Natural killer cell (primary cell): ENCODE measurements at regions of chr15 and their contacts with region 1.

Region 1: DNA sequence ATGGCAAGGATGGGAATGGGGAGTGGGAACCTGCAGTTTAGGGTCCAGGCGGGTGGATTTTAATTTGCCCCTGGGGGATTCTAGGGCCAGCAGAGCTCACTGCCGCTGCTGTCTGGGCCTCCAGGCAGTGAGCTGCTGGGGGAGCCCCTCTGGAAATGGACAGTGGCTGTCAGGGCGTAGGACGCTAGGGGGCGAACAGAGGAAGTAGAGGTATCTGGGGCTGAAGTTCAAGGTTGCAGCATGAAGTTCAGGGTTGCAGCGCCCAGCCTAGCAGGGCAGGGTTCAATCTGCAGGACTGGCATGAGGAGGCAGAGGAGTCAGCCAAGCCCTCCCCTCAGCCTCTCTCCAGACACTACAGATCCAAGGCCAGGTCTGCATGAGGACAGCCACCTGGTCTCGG is 49.6 kb downstream of the APBA2 start:
- DNase-seq: peak; percentile 53 to 76
- ATAC-seq: peak; percentile 51 to 76 (median 69)
- H3K4me3 ChIP-seq: no peak overlapping the region
- H3K4me3 Mint-ChIP-seq: peak overlapping the region; percentile 78
- H3K27ac ChIP-seq: no peak overlapping the region
- H3K27ac Mint-ChIP-seq: peak overlapping the region; percentile 89 to 97
- H3K4me1 ChIP-seq: peaks cover 68% of the 10 kb centered on the region
- H3K4me1 Mint-ChIP-seq: peaks cover 59 to 76% of the 10 kb centered on the region in 2 donors
- H3K27me3 ChIP-seq: no peaks in the 10 kb centered on the region
- H3K27me3 Mint-ChIP-seq: no peaks in the 10 kb centered on the region
- CTCF ChIP-seq: peak; percentile 73

Region 2: DNA sequence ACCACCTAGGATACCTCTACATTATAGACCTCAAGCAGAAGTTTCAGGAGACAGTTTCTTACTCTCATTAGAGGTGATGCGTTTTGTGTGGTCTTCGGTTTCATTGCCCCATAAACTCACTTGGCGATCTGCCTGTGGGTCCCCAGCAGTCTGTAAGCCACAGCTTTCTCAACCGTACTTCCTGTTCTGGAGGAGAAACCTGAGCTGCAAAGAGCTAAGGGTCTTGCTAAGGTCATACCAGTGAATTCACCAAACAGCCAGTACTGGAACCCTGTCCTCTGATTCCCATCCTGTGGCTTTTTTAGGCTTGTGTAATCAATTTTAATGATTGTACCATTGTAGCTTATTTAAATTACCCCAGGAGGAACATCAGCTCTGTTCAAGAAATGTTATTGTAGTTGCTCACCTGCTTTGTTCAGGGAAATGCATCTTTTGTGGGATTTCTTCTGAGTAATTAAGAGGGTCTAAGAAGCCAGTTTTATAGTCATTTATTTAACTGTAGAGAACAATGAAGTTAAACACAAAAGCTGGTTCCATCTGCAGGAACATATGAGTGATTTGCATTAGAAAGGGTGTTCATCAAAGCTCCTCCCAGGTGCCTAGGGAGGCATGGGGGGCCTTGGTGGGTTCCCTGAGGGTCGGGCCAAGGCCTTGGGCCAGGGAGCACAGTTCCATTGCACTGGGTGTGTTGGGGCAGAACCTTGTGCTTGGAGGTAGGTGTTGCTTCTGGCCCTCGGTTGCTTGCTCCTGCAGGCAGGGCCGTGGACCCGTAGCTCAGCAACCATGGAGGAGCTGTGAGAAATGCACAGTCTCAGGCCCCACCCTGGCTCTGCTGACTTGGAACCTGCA is 20.1 kb after region 1 on chr15:
- intact Hi-C with region 1: loop called (anchors 2 kb)
- DNase-seq: peak in 1 of 2 donors; percentile 60
- ATAC-seq: peak; percentile 58 to 81 (median 62)
- H3K4me3 ChIP-seq: no peak overlapping the region
- H3K4me3 Mint-ChIP-seq: peak overlapping the region; percentile 87
- H3K27ac ChIP-seq: peak overlapping the region; percentile 71
- H3K27ac Mint-ChIP-seq: peak overlapping the region; percentile 94 to 95
- H3K4me1 ChIP-seq: peaks cover 58% of the 10 kb centered on the region
- H3K4me1 Mint-ChIP-seq: peaks cover 67 to 68% of the 10 kb centered on the region in 2 donors
- H3K27me3 ChIP-seq: no peaks in the 10 kb centered on the region
- H3K27me3 Mint-ChIP-seq: no peaks in the 10 kb centered on the region
- CTCF ChIP-seq: no peak

Region 3: DNA sequence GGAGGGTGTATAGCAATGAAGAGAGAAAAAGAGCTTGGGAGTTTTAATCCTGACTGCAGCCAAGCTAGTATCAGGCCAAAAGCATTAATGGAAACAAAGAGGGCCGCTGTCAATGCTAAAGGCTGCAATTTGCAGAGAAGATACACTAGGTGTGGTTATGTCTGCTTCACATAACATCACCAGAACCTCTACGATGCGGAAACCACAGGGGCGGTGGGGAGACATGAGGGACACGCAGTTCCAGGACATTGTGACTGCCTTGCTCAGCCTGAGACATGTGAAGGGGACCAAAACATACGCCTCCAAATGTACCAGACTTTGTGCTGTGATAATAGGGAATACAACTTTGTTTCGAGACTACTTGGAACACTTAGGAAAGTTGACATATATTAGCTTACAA is 38.8 kb after region 1 on chr15:
- intact Hi-C with region 1: loop called (anchors 1 kb)
- DNase-seq: peak; percentile 51 to 73
- ATAC-seq: peak; percentile 82 to 96 (median 90)
- H3K4me3 ChIP-seq: no peak overlapping the region
- H3K4me3 Mint-ChIP-seq: peak overlapping the region; percentile 61
- H3K27ac ChIP-seq: peak overlapping the region; percentile 77
- H3K27ac Mint-ChIP-seq: peak overlapping the region; percentile 93 to 95
- H3K4me1 ChIP-seq: peaks cover 8% of the 10 kb centered on the region
- H3K4me1 Mint-ChIP-seq: peaks cover 53 to 57% of the 10 kb centered on the region in 2 donors
- H3K27me3 ChIP-seq: no peaks in the 10 kb centered on the region
- H3K27me3 Mint-ChIP-seq: no peaks in the 10 kb centered on the region
- CTCF ChIP-seq: no peak

Region 4: GRCh38 chr15:28994831-28995596 is 59.7 kb after region 1 on chr15:
- intact Hi-C with region 1: loop called (anchors 2 kb)
- DNase-seq: no peak
- ATAC-seq: no peak
- H3K4me3 ChIP-seq: no peak overlapping the region
- H3K4me3 Mint-ChIP-seq: peak overlapping the region; percentile 73
- H3K27ac ChIP-seq: peak overlapping the region; percentile 85
- H3K27ac Mint-ChIP-seq: peak overlapping the region; percentile 90 to 93
- H3K4me1 ChIP-seq: peaks cover 53% of the 10 kb centered on the region
- H3K4me1 Mint-ChIP-seq: peaks cover 60 to 77% of the 10 kb centered on the region in 2 donors
- H3K27me3 ChIP-seq: no peaks in the 10 kb centered on the region
- H3K27me3 Mint-ChIP-seq: no peaks in the 10 kb centered on the region
- CTCF ChIP-seq: no peak

Region 5: DNA sequence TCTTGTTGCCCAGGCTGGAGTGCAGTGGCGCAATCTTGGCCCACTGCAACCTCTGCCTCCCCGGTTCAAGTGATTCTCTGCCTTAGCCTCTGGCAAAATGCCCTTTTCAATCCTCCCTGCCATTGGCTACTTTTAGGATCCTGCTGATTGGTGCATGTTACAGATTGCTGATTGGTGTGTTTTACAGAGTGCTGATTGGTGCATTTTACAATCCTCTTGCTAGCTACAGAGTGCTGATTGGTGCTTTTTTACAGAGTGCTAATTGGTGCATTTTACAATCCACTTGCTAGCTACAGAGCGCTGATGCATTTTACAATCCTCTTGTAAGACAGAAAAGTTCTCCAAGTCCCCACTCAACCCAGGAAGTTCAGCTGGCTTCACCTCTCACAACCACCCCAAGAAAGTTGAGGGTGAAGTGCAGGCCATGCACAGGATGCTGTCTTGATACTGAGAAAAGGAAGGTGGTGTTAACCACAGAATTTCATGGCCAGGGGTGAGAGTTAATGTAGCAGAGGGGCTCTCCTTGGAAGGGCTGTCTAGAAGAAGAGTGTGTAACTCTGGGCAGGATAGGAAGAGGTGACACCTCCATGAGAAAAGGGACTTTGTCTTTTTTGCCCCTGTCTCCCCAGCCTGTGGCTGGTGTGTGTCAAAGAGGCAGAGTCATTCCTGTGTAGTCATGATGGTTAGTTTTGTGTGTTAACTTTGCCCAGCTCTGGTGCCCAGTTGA is 96.3 kb after region 1 on chr15:
- intact Hi-C with region 1: loop called (anchors 5 kb)
- DNase-seq: peak; percentile 35 to 45
- ATAC-seq: peak; percentile 83 to 87 (median 83)
- H3K4me3 ChIP-seq: no peak overlapping the region
- H3K4me3 Mint-ChIP-seq: peak overlapping the region; percentile 60
- H3K27ac ChIP-seq: peak overlapping the region; percentile 75
- H3K27ac Mint-ChIP-seq: peak overlapping the region; percentile 87 to 90
- H3K4me1 ChIP-seq: peaks cover 64% of the 10 kb centered on the region
- H3K4me1 Mint-ChIP-seq: peaks cover 72 to 79% of the 10 kb centered on the region in 2 donors
- H3K27me3 ChIP-seq: no peaks in the 10 kb centered on the region
- H3K27me3 Mint-ChIP-seq: no peaks in the 10 kb centered on the region
- CTCF ChIP-seq: no peak

Region 6: DNA sequence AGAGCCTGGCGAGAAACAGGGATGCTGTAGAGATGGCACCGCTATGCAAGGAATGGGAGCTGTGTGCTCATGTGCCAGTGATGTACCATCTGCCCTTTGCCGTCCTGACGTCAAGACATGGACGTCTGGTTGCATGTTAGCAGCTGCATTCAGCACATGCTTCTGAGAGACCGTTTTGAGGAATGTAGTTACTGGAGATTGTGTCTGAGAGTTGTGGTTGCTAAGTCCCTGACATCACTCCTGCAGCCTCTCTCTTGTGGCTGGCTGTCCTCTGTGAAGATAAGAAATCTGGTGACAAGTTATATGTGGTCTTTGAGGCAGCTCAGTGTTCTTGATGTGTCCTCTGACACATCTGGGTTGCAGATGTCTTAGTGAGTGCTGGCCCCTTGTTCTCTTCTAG is 115.5 kb after region 1 on chr15:
- intact Hi-C with region 1: loop called (anchors 5 kb)
- DNase-seq: peak; percentile 28 to 57
- ATAC-seq: peak; percentile 88 to 96 (median 90)
- H3K4me3 ChIP-seq: no peak overlapping the region
- H3K4me3 Mint-ChIP-seq: peak overlapping the region; percentile 63
- H3K27ac ChIP-seq: peak overlapping the region; percentile 54
- H3K27ac Mint-ChIP-seq: peak overlapping the region; percentile 83 to 87
- H3K4me1 ChIP-seq: peaks cover 26% of the 10 kb centered on the region
- H3K4me1 Mint-ChIP-seq: peaks cover 56 to 60% of the 10 kb centered on the region in 2 donors
- H3K27me3 ChIP-seq: no peaks in the 10 kb centered on the region
- H3K27me3 Mint-ChIP-seq: no peaks in the 10 kb centered on the region
- CTCF ChIP-seq: no peak

Region 7: DNA sequence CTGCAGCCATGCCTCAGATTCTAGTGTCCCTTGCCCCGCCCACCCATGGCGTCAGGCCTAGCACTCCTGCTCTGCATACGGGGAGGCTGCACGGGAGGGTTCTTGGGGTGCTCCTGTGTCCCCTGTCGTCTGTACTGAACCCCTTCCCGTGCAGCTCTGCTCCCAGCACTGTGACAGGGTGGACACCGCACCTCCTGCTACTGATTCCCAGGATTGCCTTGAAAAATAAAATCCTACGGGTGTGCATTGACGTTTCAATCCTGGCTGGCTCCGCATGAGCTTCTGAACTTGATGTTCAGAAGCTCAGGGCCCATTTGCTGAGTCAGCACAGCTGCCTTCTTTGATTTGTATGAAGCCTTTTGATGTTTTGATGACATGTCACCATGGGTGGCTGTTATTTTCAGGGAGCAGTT is 126.9 kb after region 1 on chr15:
- intact Hi-C with region 1: no loop called
- DNase-seq: no peak
- ATAC-seq: no peak
- H3K4me3 ChIP-seq: no peak overlapping the region
- H3K4me3 Mint-ChIP-seq: no peak overlapping the region
- H3K27ac ChIP-seq: no peak overlapping the region
- H3K27ac Mint-ChIP-seq: peak overlapping the region in 1 of 2 donors; percentile 64
- H3K4me1 ChIP-seq: peaks cover 36% of the 10 kb centered on the region
- H3K4me1 Mint-ChIP-seq: peaks cover 72 to 83% of the 10 kb centered on the region in 2 donors
- H3K27me3 ChIP-seq: no peaks in the 10 kb centered on the region
- H3K27me3 Mint-ChIP-seq: no peaks in the 10 kb centered on the region
- CTCF ChIP-seq: no peak

Region 8: DNA sequence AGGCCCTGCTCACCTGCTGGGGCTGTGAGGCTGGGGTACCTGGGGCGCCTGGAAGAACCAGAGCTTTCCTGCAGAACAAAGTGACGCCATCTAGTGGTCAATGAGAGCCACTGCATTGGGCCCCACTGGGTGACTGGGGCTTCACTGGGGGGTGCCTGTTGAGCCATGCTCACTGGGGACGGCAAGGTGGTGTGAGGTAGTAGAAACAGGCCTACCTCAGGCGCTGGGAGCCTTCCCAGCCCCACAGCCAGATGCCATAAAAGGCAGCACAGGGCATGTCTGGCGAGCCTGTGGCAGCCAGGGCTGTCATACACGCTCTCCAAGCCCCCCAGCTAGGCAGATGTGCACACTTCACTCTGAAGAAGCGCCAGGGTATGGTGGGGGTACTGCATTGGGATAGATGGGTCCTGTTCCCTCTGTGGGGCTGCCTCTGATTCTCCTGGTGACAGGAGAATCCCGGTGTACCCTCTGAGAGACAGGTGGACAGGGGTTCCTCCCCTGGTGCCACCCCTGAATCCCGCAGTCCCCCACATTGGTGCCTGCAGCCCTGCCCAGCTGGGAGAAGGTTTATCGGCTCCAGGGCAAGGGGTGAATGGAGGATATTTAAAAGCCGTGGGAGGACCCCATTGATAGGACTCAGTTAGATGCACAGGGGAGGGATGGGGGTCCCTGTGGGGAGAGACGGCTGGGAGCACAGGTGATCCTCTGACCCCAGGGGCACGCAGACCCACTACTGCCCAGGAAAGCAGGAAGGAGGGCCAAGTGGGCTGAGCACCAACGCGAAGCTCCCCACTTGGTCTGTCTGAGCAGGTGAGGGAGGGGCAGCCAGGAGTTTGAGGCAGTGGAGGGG is 155.5 kb after region 1 on chr15:
- intact Hi-C with region 1: loop called (anchors 2 kb)
- DNase-seq: peak; percentile 55 to 70
- ATAC-seq: peak; percentile 57 to 61 (median 61)
- H3K4me3 ChIP-seq: no peak overlapping the region
- H3K4me3 Mint-ChIP-seq: peak overlapping the region; percentile 78
- H3K27ac ChIP-seq: peak overlapping the region; percentile 76
- H3K27ac Mint-ChIP-seq: peak overlapping the region; percentile 73 to 92
- H3K4me1 ChIP-seq: peaks cover 37% of the 10 kb centered on the region
- H3K4me1 Mint-ChIP-seq: peaks cover 40 to 48% of the 10 kb centered on the region in 2 donors
- H3K27me3 ChIP-seq: no peaks in the 10 kb centered on the region
- H3K27me3 Mint-ChIP-seq: no peaks in the 10 kb centered on the region
- CTCF ChIP-seq: peak; percentile 97

Region 9: GRCh38 chr15:29289173-29289572 is 353.8 kb after region 1 on chr15:
- intact Hi-C with region 1: no loop called
- DNase-seq: no peak
- ATAC-seq: no peak
- H3K4me3 ChIP-seq: no peak overlapping the region
- H3K4me3 Mint-ChIP-seq: no peak overlapping the region
- H3K27ac ChIP-seq: no peak overlapping the region
- H3K27ac Mint-ChIP-seq: no peak overlapping the region
- H3K4me1 ChIP-seq: no peaks in the 10 kb centered on the region
- H3K4me1 Mint-ChIP-seq: no peaks in the 10 kb centered on the region
- H3K27me3 ChIP-seq: no peaks in the 10 kb centered on the region
- H3K27me3 Mint-ChIP-seq: peaks cover 30 to 60% of the 10 kb centered on the region in 2 donors
- CTCF ChIP-seq: no peak